Activated T-helper 2 cell treated with anti-CD3 and anti-CD28 coated beads, Interferon-gamma antibody, Interleukin-2, Interleukin-4, amounts not matched to agents 10 μg/mL and 5 μg/mL and 100 μg/mL, durations not matched to agents 14 hours and 24 hours and 36 hours (primary cell): ENCODE measurements at regions of chrX and their contacts with region 1.

Region 1: GRCh38 chrX:2811271-2811670 is 17.5 kb upstream of the GYG2 start:
- DNase-seq: no peak
- H3K4me3 Mint-ChIP-seq: no peak overlapping the region
- H3K27ac Mint-ChIP-seq: no peak overlapping the region
- H3K4me1 Mint-ChIP-seq: no peaks in the 10 kb centered on the region
- H3K27me3 Mint-ChIP-seq: peaks cover 11% of the 10 kb centered on the region

Region 2: DNA sequence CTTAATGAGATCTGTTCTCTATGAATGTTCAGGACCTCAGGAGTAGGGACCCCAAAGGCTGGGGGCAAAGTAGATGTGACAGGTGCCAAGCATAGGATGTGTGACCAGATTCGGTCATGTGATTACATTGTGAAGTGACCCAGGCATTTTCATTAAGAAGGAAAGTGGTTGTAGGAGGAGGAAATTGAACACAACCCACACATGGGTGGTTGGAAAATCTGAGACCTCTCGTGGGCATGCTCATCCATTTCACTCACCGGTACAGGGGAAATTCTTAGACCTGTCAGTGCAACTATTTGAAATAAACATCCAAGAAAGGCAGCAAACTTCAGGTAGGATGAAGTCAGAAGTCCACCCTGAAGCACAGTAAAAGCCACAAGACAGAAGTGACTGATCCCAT is 163.6 kb before region 1 on chrX:
- intact Hi-C with region 1: loop called (anchors 1 kb)
- DNase-seq: no peak
- H3K4me3 Mint-ChIP-seq: no peak overlapping the region
- H3K27ac Mint-ChIP-seq: peak overlapping the region; percentile 68
- H3K4me1 Mint-ChIP-seq: peaks cover 19% of the 10 kb centered on the region
- H3K27me3 Mint-ChIP-seq: no peaks in the 10 kb centered on the region

Region 3: GRCh38 chrX:2689773-2690666 is 121.3 kb before region 1 on chrX:
- intact Hi-C with region 1: no loop called
- DNase-seq: no peak
- H3K4me3 Mint-ChIP-seq: peak overlapping the region; percentile 76
- H3K27ac Mint-ChIP-seq: no peak overlapping the region
- H3K4me1 Mint-ChIP-seq: peaks cover 16% of the 10 kb centered on the region
- H3K27me3 Mint-ChIP-seq: peaks cover 1% of the 10 kb centered on the region